Activated CD4-positive, alpha-beta T cell treated with anti-CD3 and anti-CD28 coated beads for 36 hours (primary cell): ENCODE measurements at regions of chr21 and their contacts with region 1.

Region 1: DNA sequence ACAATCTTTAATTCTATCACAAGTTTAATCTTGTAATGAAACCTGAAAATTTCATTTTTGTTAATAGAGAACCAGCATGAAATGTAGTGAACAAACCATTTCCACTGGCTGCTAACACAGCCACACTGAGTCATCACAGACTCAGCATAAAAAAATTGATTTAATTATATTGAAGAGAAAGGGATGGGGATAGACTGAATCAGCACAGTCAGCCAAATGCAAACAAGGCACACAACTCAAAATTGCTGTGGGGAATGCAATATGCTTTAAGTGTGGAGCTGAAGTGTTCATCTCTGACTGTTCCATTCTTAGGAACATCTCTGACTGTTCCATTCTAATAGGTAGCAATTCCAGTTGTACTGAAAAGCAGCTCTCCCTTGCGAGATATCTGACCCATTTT is 299.8 kb downstream of the MRPL39 start:
- DNase-seq: no peak
- ATAC-seq: no peak
- H3K4me3 Mint-ChIP-seq: no peak overlapping the region
- H3K27ac Mint-ChIP-seq: no peak overlapping the region
- H3K4me1 Mint-ChIP-seq: no peaks in the 10 kb centered on the region
- H3K27me3 Mint-ChIP-seq: peaks cover 1% of the 10 kb centered on the region

Region 2: GRCh38 chr21:25350056-25350455 is 42.6 kb after region 1 on chr21:
- CTCF ChIA-PET with region 1: no interaction called
- POLR2A ChIA-PET with region 1: no interaction called
- intact Hi-C with region 1: loop called in 1 of 2 experiments (anchors 5 kb)
- DNase-seq: peak; percentile 75
- ATAC-seq: peak; percentile 77
- H3K4me3 Mint-ChIP-seq: no peak overlapping the region
- H3K27ac Mint-ChIP-seq: no peak overlapping the region
- H3K4me1 Mint-ChIP-seq: peaks cover 7% of the 10 kb centered on the region
- H3K27me3 Mint-ChIP-seq: peaks cover 27% of the 10 kb centered on the region